Tibial artery (tissue), 4 donors: ENCODE measurements at regions of chr5 and their contacts with region 1.

Region 1: GRCh38 chr5:58498340-58498942 is 7.2 kb downstream of the GAPT start:
- DNase-seq: peak in 1 of 2 donors; percentile 24
- H3K4me3 ChIP-seq: no peak overlapping the region
- H3K27ac ChIP-seq: no peak overlapping the region
- H3K4me1 ChIP-seq: no peaks in the 10 kb centered on the region
- H3K27me3 ChIP-seq: peaks cover 0 to 4% of the 10 kb centered on the region in 2 donors
- CTCF ChIP-seq: peak; percentile 54 to 65

Region 2: GRCh38 chr5:58286741-58287140 is 211.7 kb before region 1 on chr5:
- intact Hi-C with region 1: no loop called
- DNase-seq: no peak
- H3K4me3 ChIP-seq: no peak overlapping the region
- H3K27ac ChIP-seq: no peak overlapping the region
- H3K4me1 ChIP-seq: no peaks in the 10 kb centered on the region
- H3K27me3 ChIP-seq: no peaks in the 10 kb centered on the region
- CTCF ChIP-seq: no peak

Region 3: GRCh38 chr5:58849921-58850667 is 351.7 kb after region 1 on chr5:
- intact Hi-C with region 1: loop called (anchors 10 kb)
- DNase-seq: no peak
- H3K4me3 ChIP-seq: no peak overlapping the region
- H3K27ac ChIP-seq: no peak overlapping the region
- H3K4me1 ChIP-seq: no peaks in the 10 kb centered on the region
- H3K27me3 ChIP-seq: peaks cover 0 to 10% of the 10 kb centered on the region in 2 donors
- CTCF ChIP-seq: peak; percentile 36